Activated naive CD4-positive, alpha-beta T cell treated with anti-CD3 and anti-CD28 coated beads for 36 hours (primary cell): ENCODE measurements at regions of chr2 and their contacts with region 1.

Region 1: DNA sequence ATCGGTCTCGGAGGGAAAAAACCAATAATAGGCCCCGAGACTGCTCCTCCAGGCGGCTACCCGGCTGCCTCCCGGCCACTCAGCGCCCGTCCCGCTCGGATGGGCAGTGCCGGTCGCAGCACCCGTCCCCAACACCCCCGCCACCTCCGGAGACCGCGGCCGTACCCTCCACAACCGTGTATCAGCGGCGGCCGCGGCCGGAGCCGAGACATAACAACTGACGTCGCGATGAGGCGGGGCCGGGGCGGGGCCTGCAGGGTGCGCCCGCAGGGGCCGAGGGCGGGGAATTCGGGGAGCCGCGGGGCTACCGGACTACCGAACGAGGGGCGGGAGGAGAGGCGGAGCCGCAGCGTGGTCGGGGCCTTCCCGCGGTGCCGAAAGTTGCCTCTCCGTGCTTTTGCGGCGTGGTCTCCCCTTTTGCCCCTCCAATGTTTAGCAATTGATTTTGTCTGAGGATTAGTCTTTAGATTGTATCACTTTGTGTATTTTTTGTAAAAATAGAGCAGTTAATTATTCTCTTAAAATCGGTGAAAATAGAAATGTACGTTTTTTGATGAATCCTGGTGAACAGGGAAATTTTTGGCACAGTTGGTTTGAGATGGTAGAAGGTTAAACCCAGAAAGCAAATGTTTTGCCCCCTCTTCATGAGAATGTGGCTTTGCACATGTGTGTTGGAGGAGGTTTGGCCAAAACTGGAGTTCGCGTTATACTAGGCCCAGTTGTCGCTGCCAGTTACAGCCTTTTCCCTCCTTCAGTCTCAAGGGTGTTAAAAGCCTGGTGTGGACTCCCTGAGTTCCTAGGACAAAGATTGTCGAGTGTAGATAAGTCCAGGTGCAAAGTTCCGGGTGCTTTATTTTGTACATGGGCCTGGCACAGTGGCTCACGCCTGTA is at the start of gene RNF103:
- DNase-seq: peak; percentile 94
- H3K4me3 Mint-ChIP-seq: peak within 1 kb of the TSS; percentile 92
- H3K27ac Mint-ChIP-seq: peak within 1 kb of the TSS; percentile 93
- H3K4me1 Mint-ChIP-seq: peaks cover 18% of the 10 kb centered on the region
- H3K27me3 Mint-ChIP-seq: peaks cover 4% of the 10 kb centered on the region
- total RNA-seq, gene RNF103: 10.7 to 11.8 TPM

Region 2: DNA sequence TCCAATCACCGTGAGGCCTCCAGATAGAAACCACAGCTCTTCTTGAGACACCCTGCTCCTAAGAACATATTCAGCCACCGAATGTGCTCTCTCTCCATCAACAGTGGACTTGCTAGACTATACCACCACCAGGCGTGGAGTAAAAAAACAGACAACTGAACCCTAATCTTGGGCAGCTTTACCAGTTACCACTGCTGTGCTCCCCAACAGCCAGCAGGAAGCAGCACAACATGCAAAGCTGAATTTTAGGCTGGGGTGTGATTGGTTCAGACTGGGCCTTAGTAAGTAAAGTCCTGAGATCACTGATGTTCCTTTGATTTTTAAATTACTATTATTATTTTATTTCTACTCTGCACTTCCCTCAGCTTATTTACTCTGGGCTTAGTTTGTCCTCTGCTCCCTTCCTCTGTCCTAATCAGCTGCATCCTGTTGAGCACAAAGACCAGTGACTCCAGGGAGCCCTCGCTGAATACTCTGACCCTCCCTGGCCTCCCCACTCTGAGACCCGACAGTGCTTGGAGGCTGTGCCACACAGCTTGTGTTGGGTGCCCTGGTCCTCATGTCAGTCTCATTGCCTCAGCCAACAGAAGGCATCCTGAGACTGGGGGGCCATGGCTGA is 402.7 kb before region 1 on chr2:
- CTCF ChIA-PET with region 1: interaction called, 3 read pairs
- intact Hi-C with region 1: loop called (anchors 5 kb)
- DNase-seq: peak; percentile 80
- H3K4me3 Mint-ChIP-seq: no peak overlapping the region
- H3K27ac Mint-ChIP-seq: no peak overlapping the region
- H3K4me1 Mint-ChIP-seq: peaks cover 16% of the 10 kb centered on the region
- H3K27me3 Mint-ChIP-seq: no peaks in the 10 kb centered on the region

Region 3: GRCh38 chr2:86562922-86563649 is 60.8 kb before region 1 on chr2 and contains the start of gene CHMP3:
- CTCF ChIA-PET with region 1: interaction called, 3 read pairs
- intact Hi-C with region 1: loop called (anchors 5 kb)
- DNase-seq: peak; percentile 97
- H3K4me3 Mint-ChIP-seq: peak within 1 kb of the TSS; percentile 92
- H3K27ac Mint-ChIP-seq: peak within 1 kb of the TSS; percentile 99
- H3K4me1 Mint-ChIP-seq: peaks cover 25% of the 10 kb centered on the region
- H3K27me3 Mint-ChIP-seq: no peaks in the 10 kb centered on the region
- total RNA-seq, gene CHMP3: 27.0 to 29.6 TPM

Region 4: GRCh38 chr2:86584151-86584913 is 39.6 kb before region 1 on chr2:
- CTCF ChIA-PET with region 1: interaction called, 3 read pairs
- intact Hi-C with region 1: loop called (anchors 1 kb)
- DNase-seq: peak; percentile 22
- H3K4me3 Mint-ChIP-seq: no peak overlapping the region
- H3K27ac Mint-ChIP-seq: peak overlapping the region; percentile 71
- H3K4me1 Mint-ChIP-seq: peaks cover 18% of the 10 kb centered on the region
- H3K27me3 Mint-ChIP-seq: no peaks in the 10 kb centered on the region

Region 5: GRCh38 chr2:86603905-86604304 is 20.0 kb before region 1 on chr2:
- CTCF ChIA-PET with region 1: no interaction called
- intact Hi-C with region 1: loop called (anchors 2 kb)
- DNase-seq: no peak
- H3K4me3 Mint-ChIP-seq: no peak overlapping the region
- H3K27ac Mint-ChIP-seq: no peak overlapping the region
- H3K4me1 Mint-ChIP-seq: peaks cover 1% of the 10 kb centered on the region
- H3K27me3 Mint-ChIP-seq: no peaks in the 10 kb centered on the region

Region 6: DNA sequence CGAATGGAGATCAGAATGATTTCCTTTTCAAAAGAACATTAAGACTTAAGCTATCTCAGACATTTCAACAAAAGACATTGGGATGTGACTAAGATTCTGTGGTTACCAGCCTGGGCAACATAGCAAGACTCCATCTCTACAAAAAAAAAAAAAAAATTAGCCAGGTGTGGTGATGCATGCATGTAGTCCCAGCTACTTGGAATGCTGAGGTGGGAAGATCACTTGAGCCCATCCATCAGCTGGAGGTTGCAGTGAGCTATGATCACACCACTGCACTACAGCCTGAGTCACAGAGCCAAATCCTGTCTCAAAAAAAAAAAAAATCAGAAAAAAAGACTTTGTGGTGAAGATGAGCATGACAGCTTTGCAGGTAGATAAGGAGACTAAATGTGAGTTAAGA is 13.0 kb before region 1 on chr2:
- CTCF ChIA-PET with region 1: interaction called, 3 read pairs
- intact Hi-C with region 1: loop called (anchors 1 kb)
- DNase-seq: no peak
- H3K4me3 Mint-ChIP-seq: no peak overlapping the region
- H3K27ac Mint-ChIP-seq: no peak overlapping the region
- H3K4me1 Mint-ChIP-seq: peaks cover 22% of the 10 kb centered on the region
- H3K27me3 Mint-ChIP-seq: no peaks in the 10 kb centered on the region

Region 7: GRCh38 chr2:86636842-86637241 is 12.9 kb after region 1 on chr2:
- CTCF ChIA-PET with region 1: no interaction called
- intact Hi-C with region 1: no loop called
- DNase-seq: no peak
- H3K4me3 Mint-ChIP-seq: no peak overlapping the region
- H3K27ac Mint-ChIP-seq: no peak overlapping the region
- H3K4me1 Mint-ChIP-seq: no peaks in the 10 kb centered on the region
- H3K27me3 Mint-ChIP-seq: no peaks in the 10 kb centered on the region